ENCODE measurements at regions of chr5 and their contacts with region 1.

Region 1: DNA sequence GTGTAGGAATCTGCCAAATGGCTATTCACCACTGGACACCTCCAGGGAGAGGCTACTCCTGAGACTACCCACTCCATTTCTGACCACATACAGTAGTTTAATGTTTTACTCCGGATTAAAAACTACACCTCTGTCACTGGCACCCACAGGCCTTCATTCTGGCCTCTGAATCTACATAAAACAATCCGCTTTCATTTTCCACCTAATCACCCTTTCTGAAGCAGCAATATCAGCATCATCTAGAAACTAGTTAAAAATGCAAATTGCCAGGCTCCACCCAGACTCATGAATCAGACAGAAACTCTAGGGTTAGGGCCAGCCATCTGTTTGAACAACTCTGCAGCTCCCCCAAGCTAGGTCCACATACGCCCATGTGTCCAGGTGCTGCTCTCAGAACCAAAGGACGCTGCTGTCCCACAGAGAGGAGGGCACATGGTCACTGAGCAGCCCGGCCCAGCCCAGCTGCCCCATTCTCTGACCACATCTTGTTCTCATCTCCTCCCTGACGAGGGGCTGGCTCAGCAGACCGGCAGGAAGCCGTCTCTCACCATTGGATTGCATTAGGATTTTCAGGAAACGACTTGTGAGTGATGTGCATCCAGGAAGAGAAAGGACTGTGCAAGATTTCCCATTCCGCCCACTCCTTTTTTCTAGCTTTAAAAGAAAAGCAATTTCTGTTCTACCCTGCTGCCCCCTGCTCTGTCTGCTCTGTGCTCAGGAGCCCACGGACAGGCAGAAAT is 34.7 kb downstream of the ADAM19 start:
- DNase-seq: peak; percentile 88
- H3K4me3 Mint-ChIP-seq: peak overlapping the region; percentile 53
- H3K27ac Mint-ChIP-seq: peak overlapping the region; percentile 97
- H3K4me1 Mint-ChIP-seq: peaks cover 79% of the 10 kb centered on the region
- H3K27me3 Mint-ChIP-seq: no peaks in the 10 kb centered on the region

Region 2: GRCh38 chr5:157354800-157355199 is 186.1 kb before region 1 on chr5:
- intact Hi-C with region 1: loop called (anchors 5 kb)
- DNase-seq: no peak
- H3K4me3 Mint-ChIP-seq: no peak overlapping the region
- H3K27ac Mint-ChIP-seq: peak overlapping the region; percentile 69
- H3K4me1 Mint-ChIP-seq: peaks cover 38% of the 10 kb centered on the region
- H3K27me3 Mint-ChIP-seq: no peaks in the 10 kb centered on the region

Region 3: DNA sequence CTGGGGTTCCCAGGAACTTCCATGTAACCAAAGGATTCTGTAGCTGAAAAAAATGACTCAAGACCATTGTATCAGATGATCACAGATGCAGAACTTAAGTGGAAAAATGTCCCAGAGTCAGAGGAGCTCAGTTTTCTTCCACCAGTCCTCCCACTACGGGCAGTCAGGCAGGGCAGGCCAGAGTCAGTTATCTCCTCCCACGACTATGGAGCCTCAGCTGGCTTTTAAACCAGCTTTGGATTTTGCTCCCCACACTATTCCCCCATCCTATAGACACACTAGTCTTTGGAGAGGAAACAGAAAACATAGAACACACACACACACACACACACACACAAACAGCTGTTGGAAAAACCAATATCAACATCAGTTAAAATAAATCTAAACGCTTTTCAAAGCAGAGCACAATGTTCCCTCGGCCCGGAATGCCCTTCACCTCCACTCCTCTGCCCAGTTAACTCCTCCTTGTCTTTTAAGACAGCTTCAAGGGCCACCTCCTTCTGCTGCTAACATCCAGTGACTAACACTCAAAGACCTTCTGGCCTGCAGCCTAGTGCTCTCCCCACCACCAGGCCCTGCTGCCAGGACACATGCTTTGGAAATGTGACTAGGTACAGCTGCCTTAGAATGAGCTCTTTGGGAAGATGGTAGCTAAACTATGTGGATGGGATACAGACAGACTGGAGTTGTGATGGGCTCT is 24.1 kb before region 1 on chr5:
- intact Hi-C with region 1: loop called (anchors 2 kb)
- DNase-seq: no peak
- H3K4me3 Mint-ChIP-seq: no peak overlapping the region
- H3K27ac Mint-ChIP-seq: peak overlapping the region; percentile 76
- H3K4me1 Mint-ChIP-seq: peaks cover 64% of the 10 kb centered on the region
- H3K27me3 Mint-ChIP-seq: no peaks in the 10 kb centered on the region

Region 4: GRCh38 chr5:157582731-157583620 is 42.1 kb after region 1 on chr5:
- intact Hi-C with region 1: loop called (anchors 1 kb)
- DNase-seq: peak; percentile 75
- H3K4me3 Mint-ChIP-seq: peak overlapping the region; percentile 65
- H3K27ac Mint-ChIP-seq: peak overlapping the region; percentile 80
- H3K4me1 Mint-ChIP-seq: peaks cover 56% of the 10 kb centered on the region
- H3K27me3 Mint-ChIP-seq: no peaks in the 10 kb centered on the region

Region 5: DNA sequence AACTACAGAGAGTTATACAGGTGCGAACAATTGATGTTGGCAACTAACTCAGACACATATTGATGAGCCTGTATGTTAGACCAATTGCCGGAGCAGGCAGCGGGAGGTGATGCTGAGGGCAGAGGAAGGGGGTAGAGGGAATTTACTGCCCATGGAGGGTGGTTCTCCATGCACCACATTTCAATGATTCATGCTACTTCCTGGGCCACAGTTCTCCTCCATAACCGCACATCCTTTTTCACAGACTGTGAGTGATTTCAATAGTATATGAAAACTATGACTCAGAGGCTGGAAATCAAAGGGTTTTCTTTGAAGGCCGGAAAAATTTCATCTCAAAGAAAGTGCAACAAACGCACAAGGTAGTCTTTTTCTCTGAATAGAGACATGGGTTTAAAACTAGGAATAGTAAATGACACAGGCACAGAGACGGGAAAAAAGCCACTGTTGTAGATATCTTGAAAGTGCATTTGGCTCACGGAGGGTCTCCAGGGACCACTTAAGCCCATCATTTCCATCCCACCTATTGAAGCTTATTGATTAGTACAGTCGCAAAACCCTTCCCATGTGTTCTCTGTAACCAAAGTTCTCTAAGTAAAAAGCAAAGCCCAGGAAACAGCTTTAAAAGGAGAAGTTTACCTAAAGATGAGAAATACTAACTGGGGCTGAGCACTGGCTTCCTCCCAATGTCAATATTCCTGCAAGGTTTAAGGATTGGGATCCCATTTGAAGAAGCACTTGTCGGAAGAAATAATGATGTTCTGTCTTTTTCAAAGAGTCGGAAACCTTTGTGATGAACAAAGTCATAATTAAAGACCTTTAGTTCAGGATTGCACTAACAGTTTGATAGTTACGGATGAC is 62.7 kb after region 1 on chr5:
- intact Hi-C with region 1: loop called (anchors 1 kb)
- DNase-seq: peak; percentile 92
- H3K4me3 Mint-ChIP-seq: peak overlapping the region; percentile 65
- H3K27ac Mint-ChIP-seq: peak overlapping the region; percentile 88
- H3K4me1 Mint-ChIP-seq: peaks cover 73% of the 10 kb centered on the region
- H3K27me3 Mint-ChIP-seq: no peaks in the 10 kb centered on the region